Transverse colon (tissue), 4 donors: ENCODE measurements at regions of chr6 and their contacts with region 1.

Region 1: DNA sequence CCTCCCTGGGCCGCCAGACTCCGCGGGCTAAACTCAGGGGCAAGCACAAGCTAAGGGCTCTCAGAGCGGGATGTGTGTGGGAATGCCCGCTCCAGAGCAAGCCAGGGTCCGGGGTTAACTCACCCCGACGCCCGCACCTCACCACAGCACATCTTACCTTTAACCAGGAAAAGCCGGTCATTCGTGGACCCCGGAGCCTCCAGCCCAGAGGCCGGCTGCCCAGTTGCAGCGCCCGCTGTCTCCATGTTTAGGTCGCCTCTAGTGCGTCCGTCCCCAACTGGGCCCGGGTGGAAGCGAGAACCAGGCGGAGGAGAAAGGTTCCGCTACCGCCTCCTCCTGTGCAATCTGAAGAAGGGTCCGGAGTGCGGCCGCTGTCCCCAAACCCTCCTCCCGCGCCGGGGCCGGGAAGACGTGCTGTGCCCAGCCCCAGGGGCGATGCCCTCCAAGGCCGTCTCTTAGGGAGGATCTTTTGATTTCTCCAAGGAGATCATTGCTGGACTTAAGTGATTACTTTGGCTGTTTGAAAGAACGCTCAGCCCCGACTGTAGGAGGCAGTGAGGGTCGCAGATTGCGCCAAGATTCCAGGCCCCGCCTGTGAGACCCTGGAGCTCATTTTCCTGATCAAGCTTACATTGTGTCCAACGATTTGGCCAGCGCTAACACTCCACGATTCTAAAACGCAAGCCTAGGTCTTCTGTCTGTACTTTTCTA is at the start of gene TMEM242:
- DNase-seq: peak; percentile 94
- H3K4me3 ChIP-seq: peak within 1 kb of the TSS; percentile 60 to 79 (median 72)
- H3K27ac ChIP-seq: peak within 1 kb of the TSS; percentile 90 to 97 (median 94)
- H3K4me1 ChIP-seq: peaks cover 5 to 18% (median 11%) of the 10 kb centered on the region in 4 donors
- H3K27me3 ChIP-seq: peaks cover 2% of the 10 kb centered on the region
- CTCF ChIP-seq: peak in 3 of 5 experiments; percentile 21 to 59 (median 45)
- EP300 ChIP-seq: no peak
- POLR2A ChIP-seq: peak; percentile 96
- total RNA-seq, gene TMEM242: 0.20 to 8.4 (median 5.8) TPM

Region 2: GRCh38 chr6:157364705-157365104 is 41.3 kb after region 1 on chr6:
- in situ Hi-C with region 1: no loop called
- intact Hi-C with region 1: no loop called
- DNase-seq: no peak
- H3K4me3 ChIP-seq: no peak overlapping the region
- H3K27ac ChIP-seq: no peak overlapping the region
- H3K4me1 ChIP-seq: no peaks in the 10 kb centered on the region
- H3K27me3 ChIP-seq: peaks cover 14% of the 10 kb centered on the region
- CTCF ChIP-seq: no peak
- EP300 ChIP-seq: no peak
- POLR2A ChIP-seq: no peak

Region 3: GRCh38 chr6:157563611-157564284 is 240.3 kb after region 1 on chr6:
- in situ Hi-C with region 1: no loop called
- intact Hi-C with region 1: no loop called
- DNase-seq: no peak
- H3K4me3 ChIP-seq: no peak overlapping the region
- H3K27ac ChIP-seq: no peak overlapping the region
- H3K4me1 ChIP-seq: peaks cover 0 to 8% (median 2%) of the 10 kb centered on the region in 4 donors
- H3K27me3 ChIP-seq: no peaks in the 10 kb centered on the region
- CTCF ChIP-seq: no peak
- EP300 ChIP-seq: no peak
- POLR2A ChIP-seq: no peak

Region 4: DNA sequence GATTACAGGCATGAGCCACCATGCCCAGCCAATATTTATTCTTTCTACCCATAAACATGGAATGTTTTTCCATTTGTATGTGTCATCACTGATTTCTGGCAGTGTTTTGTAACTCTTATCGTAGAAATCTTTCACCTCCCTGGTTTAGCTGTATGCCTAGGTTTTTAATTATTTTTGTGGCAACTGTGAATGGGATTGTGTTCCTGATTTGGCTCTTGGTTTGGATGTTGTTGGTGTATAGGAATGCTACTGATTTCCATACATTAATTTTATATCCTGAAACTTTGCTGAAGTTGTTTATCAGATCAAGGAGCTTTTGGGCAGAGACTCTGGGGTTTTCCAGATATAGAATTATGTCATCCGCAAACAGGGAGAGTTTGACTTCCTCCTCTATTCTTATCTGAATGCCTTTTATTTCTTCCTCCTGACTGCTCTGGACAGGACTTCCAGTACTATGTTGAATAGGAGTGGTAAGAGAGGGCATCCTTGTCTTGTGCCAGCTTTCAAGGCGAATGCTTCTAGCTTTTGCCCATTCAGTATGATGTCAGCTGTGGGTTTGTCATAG is 256.1 kb after region 1 on chr6:
- in situ Hi-C with region 1: loop called in 1 of 4 experiments (anchors 10 kb)
- intact Hi-C with region 1: no loop called
- DNase-seq: no peak
- H3K4me3 ChIP-seq: no peak overlapping the region
- H3K27ac ChIP-seq: peak overlapping the region in 2 of 4 donors; percentile 10 to 54
- H3K4me1 ChIP-seq: peaks cover 0 to 12% (median 0%) of the 10 kb centered on the region in 4 donors
- H3K27me3 ChIP-seq: no peaks in the 10 kb centered on the region
- CTCF ChIP-seq: no peak
- EP300 ChIP-seq: no peak
- POLR2A ChIP-seq: no peak